Endothelial cell of umbilical vein (primary cell): ENCODE measurements at regions of chr1 and their contacts with region 1.

Region 1: GRCh38 chr1:25037174-25038074 is 107.3 kb upstream of the RUNX3 start:
- DNase-seq: peak; percentile 19
- H3K4me3 ChIP-seq: no peak overlapping the region
- H3K27ac ChIP-seq: no peak overlapping the region
- H3K4me1 ChIP-seq: no peaks in the 10 kb centered on the region
- H3K27me3 ChIP-seq: no peaks in the 10 kb centered on the region
- CTCF ChIP-seq: peak; percentile 52 to 56
- POLR2A ChIP-seq: no peak

Region 2: DNA sequence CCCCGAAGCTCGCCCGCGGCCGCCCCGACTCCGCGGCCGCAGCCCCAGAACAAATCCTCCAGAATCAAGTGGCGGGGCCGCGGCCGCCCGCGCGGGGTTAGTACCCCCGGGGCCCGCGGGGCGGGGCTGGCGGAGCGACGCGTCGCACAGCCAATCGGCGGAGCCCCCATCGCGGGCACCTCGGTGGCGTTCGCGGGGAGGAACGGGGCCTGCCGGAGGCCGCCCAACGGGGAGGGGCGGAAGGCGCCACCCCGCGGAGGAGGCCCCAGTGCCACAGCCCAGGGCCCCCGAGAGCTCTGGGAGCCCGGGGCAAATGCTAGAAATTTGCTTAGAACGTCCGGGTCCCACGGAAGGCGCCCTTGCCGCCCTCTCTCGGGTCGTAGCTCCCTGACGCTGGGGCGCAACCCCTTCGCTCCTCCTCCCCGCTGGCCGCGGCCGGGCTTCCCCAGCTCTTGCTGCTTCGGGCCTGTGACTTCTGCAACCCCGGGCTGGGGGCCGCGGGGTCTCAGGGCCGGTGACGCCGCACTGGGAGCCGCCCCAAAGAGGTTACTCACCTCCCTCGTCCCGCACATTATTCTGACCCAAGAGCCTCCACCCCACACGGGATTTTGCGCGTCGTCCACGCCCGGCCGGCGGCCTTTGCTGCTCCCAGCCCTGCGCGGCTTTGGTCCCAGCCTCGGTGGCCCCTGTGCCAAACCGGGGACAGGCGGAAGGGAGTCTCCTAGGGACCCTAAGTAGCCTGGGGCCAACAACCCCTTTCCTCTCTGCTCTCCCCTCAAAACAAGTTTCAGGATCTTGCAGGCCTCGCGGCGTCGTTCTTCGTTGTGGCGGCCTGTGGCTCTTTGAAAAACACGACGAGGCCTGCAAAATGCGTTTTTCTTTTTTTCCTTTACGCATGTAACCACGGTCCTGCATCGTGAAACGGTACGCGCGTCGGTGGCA is 106.9 kb before region 1 on chr1 and contains the start of gene RUNX3:
- CTCF ChIA-PET with region 1: interaction called, 27 read pairs
- POLR2A ChIA-PET with region 1: no interaction called
- dilution Hi-C with region 1: no loop called
- intact Hi-C with region 1: loop called (anchors 1 kb)
- DNase-seq: no peak
- H3K4me3 ChIP-seq: no peak within 1 kb of the TSS
- H3K27ac ChIP-seq: no peak within 1 kb of the TSS
- H3K4me1 ChIP-seq: no peaks in the 10 kb centered on the region
- H3K27me3 ChIP-seq: peaks cover 90 to 92% of the 10 kb centered on the region in 2 experiments
- CTCF ChIP-seq: no peak
- POLR2A ChIP-seq: no peak
- total RNA-seq, gene RUNX3: not detected in 2 replicates

Region 3: GRCh38 chr1:25026730-25027450 is 10.5 kb before region 1 on chr1:
- CTCF ChIA-PET with region 1: interaction called, 25 read pairs
- POLR2A ChIA-PET with region 1: no interaction called
- dilution Hi-C with region 1: no loop called
- intact Hi-C with region 1: no loop called
- DNase-seq: no peak
- H3K4me3 ChIP-seq: no peak overlapping the region
- H3K27ac ChIP-seq: no peak overlapping the region
- H3K4me1 ChIP-seq: no peaks in the 10 kb centered on the region
- H3K27me3 ChIP-seq: no peaks in the 10 kb centered on the region
- CTCF ChIP-seq: no peak
- POLR2A ChIP-seq: no peak

Region 4: GRCh38 chr1:25099343-25099951 is 62.0 kb after region 1 on chr1:
- CTCF ChIA-PET with region 1: interaction called, 5 read pairs
- POLR2A ChIA-PET with region 1: no interaction called
- dilution Hi-C with region 1: no loop called
- intact Hi-C with region 1: loop called (anchors 1 kb)
- DNase-seq: no peak
- H3K4me3 ChIP-seq: no peak overlapping the region
- H3K27ac ChIP-seq: no peak overlapping the region
- H3K4me1 ChIP-seq: peaks cover 6% of the 10 kb centered on the region
- H3K27me3 ChIP-seq: peaks cover 0 to 2% of the 10 kb centered on the region in 2 experiments
- CTCF ChIP-seq: no peak
- POLR2A ChIP-seq: no peak

Region 5: DNA sequence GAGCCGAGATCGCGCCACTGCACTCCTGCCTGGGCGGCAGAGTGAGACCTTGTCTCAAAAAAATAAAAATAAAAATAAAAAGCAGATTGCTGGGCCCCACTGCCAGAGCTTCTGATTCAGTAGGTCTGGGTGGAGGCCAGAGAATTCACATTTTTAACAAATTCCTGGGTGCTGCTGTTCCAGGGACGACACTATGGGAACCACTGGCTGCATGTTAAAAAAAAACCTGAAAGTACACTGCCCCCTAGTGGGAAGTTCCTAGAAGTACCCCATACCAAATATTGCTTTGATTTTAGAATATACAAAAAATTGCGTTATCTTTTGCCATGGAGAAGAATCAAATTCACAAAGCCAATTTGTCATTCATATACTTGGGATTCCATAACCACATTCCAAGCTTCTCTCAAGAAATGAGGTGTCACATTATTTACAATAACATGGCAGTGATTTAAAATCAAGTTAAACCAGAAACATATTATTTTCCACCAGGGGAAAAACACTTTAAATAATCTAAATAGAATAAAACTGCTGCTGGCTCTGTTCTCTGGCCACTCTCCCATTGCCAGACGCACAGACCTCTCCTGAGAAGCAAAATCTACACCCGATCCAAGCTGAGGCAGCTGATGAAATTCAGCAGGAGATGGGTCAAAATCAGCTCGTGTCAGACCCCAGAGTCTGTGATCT is 167.5 kb after region 1 on chr1:
- CTCF ChIA-PET with region 1: interaction called, 3 read pairs
- POLR2A ChIA-PET with region 1: no interaction called
- dilution Hi-C with region 1: no loop called
- intact Hi-C with region 1: loop called (anchors 5 kb)
- DNase-seq: peak; percentile 21
- H3K4me3 ChIP-seq: no peak overlapping the region
- H3K27ac ChIP-seq: no peak overlapping the region
- H3K4me1 ChIP-seq: no peaks in the 10 kb centered on the region
- H3K27me3 ChIP-seq: peaks cover 0 to 6% of the 10 kb centered on the region in 2 experiments
- CTCF ChIP-seq: peak; percentile 57 to 61
- POLR2A ChIP-seq: no peak